CD8-positive, alpha-beta T cell (primary cell): ENCODE measurements at regions of chr11 and their contacts with region 1.

Region 1: GRCh38 chr11:4187055-4187988 is 92.7 kb downstream of the RRM1 start:
- DNase-seq: peak; percentile 72 to 92 (median 82)
- ATAC-seq: peak; percentile 93
- H3K4me3 ChIP-seq: peak overlapping the region; percentile 39 to 50
- H3K4me3 Mint-ChIP-seq: peak overlapping the region; percentile 76
- H3K27ac ChIP-seq: no peak overlapping the region
- H3K27ac Mint-ChIP-seq: no peak overlapping the region
- H3K4me1 ChIP-seq: no peaks in the 10 kb centered on the region
- H3K4me1 Mint-ChIP-seq: peaks cover 4% of the 10 kb centered on the region
- H3K27me3 ChIP-seq: no peaks in the 10 kb centered on the region
- H3K27me3 Mint-ChIP-seq: peaks cover 8% of the 10 kb centered on the region
- CTCF ChIP-seq: peak; percentile 97

Region 2: GRCh38 chr11:3412837-3413236 is 774.5 kb before region 1 on chr11:
- CTCF ChIA-PET with region 1: no interaction called
- POLR2A ChIA-PET with region 1: no interaction called
- intact Hi-C with region 1: no loop called
- DNase-seq: no peak
- ATAC-seq: no peak
- H3K4me3 ChIP-seq: no peak overlapping the region
- H3K4me3 Mint-ChIP-seq: no peak overlapping the region
- H3K27ac ChIP-seq: no peak overlapping the region
- H3K27ac Mint-ChIP-seq: no peak overlapping the region
- H3K4me1 ChIP-seq: no peaks in the 10 kb centered on the region
- H3K4me1 Mint-ChIP-seq: peaks cover 7% of the 10 kb centered on the region
- H3K27me3 ChIP-seq: no peaks in the 10 kb centered on the region
- H3K27me3 Mint-ChIP-seq: peaks cover 2% of the 10 kb centered on the region
- CTCF ChIP-seq: no peak

Region 3: GRCh38 chr11:4203603-4204360 is 16.5 kb after region 1 on chr11:
- CTCF ChIA-PET with region 1: interaction called, 13 read pairs
- POLR2A ChIA-PET with region 1: no interaction called
- intact Hi-C with region 1: no loop called
- DNase-seq: no peak
- ATAC-seq: no peak
- H3K4me3 ChIP-seq: no peak overlapping the region
- H3K4me3 Mint-ChIP-seq: no peak overlapping the region
- H3K27ac ChIP-seq: no peak overlapping the region
- H3K27ac Mint-ChIP-seq: no peak overlapping the region
- H3K4me1 ChIP-seq: no peaks in the 10 kb centered on the region
- H3K4me1 Mint-ChIP-seq: no peaks in the 10 kb centered on the region
- H3K27me3 ChIP-seq: peaks cover 0 to 3% of the 10 kb centered on the region in 2 experiments
- H3K27me3 Mint-ChIP-seq: peaks cover 24% of the 10 kb centered on the region
- CTCF ChIP-seq: no peak

Region 4: GRCh38 chr11:4496557-4497275 is 309.4 kb after region 1 on chr11:
- CTCF ChIA-PET with region 1: interaction called, 62 read pairs
- POLR2A ChIA-PET with region 1: no interaction called
- intact Hi-C with region 1: loop called (anchors 1 kb)
- DNase-seq: no peak
- ATAC-seq: no peak
- H3K4me3 ChIP-seq: no peak overlapping the region
- H3K4me3 Mint-ChIP-seq: no peak overlapping the region
- H3K27ac ChIP-seq: no peak overlapping the region
- H3K27ac Mint-ChIP-seq: no peak overlapping the region
- H3K4me1 ChIP-seq: no peaks in the 10 kb centered on the region
- H3K4me1 Mint-ChIP-seq: no peaks in the 10 kb centered on the region
- H3K27me3 ChIP-seq: no peaks in the 10 kb centered on the region
- H3K27me3 Mint-ChIP-seq: peaks cover 5% of the 10 kb centered on the region
- CTCF ChIP-seq: no peak

Region 5: DNA sequence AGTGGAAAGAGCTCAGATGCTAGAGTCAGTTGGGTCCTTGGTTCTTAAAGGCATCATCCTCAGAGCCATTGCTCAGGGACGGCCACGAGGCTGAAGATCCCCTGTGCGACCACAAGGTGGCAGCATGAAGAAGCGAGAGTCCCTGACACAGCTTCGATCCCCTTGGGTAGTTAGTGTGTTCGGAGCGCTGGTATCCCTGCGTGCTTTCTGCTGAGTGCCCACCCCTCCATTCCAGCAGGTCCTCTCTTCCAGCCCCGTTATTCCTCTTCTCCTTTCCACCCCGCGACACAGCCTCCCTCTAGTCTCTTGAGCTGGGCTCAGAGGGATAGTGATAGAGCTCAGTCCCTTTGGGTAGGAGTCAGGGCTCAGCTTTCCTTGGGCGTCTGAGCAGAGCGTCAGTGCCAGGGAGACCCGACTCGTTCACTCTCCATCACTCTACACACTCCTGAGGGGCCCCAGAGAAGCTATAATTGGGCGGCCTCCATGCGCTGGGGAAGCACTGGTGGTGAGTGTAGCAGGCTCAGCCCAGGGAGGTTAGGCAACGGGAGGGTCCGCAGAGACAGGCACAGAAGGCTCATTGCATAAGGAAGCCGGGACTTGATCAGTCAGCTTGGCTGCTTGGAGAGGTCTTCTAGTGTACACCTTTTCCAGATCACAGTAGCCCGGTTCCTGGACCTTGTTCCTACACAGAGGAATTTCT is 449.8 kb after region 1 on chr11 and contains the start of gene OR51D1:
- CTCF ChIA-PET with region 1: interaction called, 7 read pairs
- POLR2A ChIA-PET with region 1: no interaction called
- intact Hi-C with region 1: loop called in 1 of 2 experiments (anchors 10 kb)
- DNase-seq: peak; percentile 47 to 77 (median 68)
- ATAC-seq: peak; percentile 91
- H3K4me3 ChIP-seq: peak within 1 kb of the TSS in 1 of 2 experiments; percentile 37
- H3K4me3 Mint-ChIP-seq: no peak within 1 kb of the TSS
- H3K27ac ChIP-seq: no peak within 1 kb of the TSS
- H3K27ac Mint-ChIP-seq: no peak within 1 kb of the TSS
- H3K4me1 ChIP-seq: no peaks in the 10 kb centered on the region
- H3K4me1 Mint-ChIP-seq: no peaks in the 10 kb centered on the region
- H3K27me3 ChIP-seq: no peaks in the 10 kb centered on the region
- H3K27me3 Mint-ChIP-seq: peaks cover 12% of the 10 kb centered on the region
- CTCF ChIP-seq: peak; percentile 89
- total RNA-seq, gene OR51D1: not detected

Region 6: DNA sequence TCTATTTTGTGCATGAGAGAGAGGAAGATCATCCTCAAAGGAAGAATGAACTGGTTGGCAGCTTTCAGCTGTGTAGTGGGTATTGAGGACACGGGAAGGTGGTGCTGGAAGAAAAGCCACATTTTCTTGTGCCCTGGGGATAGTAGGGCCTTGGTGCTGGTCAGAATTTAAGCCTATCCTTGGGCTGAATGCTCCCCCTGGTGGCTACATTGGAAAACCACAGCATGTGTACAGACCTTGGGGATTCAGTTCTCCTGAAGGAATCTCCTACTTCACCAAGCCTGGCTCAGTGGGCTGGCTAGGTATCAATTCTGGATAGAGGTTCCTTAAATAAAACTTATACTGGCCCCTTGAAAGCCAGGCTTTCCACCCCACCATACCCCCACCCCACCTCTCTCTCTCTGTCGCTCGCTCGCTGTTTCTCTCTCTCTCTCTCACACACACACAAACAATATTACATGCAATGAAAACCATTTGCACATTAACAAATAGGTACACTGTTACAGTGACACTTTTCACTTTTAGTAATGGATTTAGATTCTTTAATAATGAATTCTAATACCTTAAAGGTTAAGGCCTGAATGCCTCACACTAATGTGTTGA is 1193.5 kb after region 1 on chr11:
- CTCF ChIA-PET with region 1: interaction called, 4 read pairs
- POLR2A ChIA-PET with region 1: no interaction called
- intact Hi-C with region 1: loop called (anchors 2 to 5 kb)
- DNase-seq: peak in 3 of 9 experiments; percentile 3 to 18 (median 4)
- ATAC-seq: no peak
- H3K4me3 ChIP-seq: no peak overlapping the region
- H3K4me3 Mint-ChIP-seq: no peak overlapping the region
- H3K27ac ChIP-seq: no peak overlapping the region
- H3K27ac Mint-ChIP-seq: no peak overlapping the region
- H3K4me1 ChIP-seq: no peaks in the 10 kb centered on the region
- H3K4me1 Mint-ChIP-seq: no peaks in the 10 kb centered on the region
- H3K27me3 ChIP-seq: no peaks in the 10 kb centered on the region
- H3K27me3 Mint-ChIP-seq: no peaks in the 10 kb centered on the region
- CTCF ChIP-seq: peak; percentile 21